ENCODE measurements at regions of chr6 and their contacts with region 1.

Region 1: DNA sequence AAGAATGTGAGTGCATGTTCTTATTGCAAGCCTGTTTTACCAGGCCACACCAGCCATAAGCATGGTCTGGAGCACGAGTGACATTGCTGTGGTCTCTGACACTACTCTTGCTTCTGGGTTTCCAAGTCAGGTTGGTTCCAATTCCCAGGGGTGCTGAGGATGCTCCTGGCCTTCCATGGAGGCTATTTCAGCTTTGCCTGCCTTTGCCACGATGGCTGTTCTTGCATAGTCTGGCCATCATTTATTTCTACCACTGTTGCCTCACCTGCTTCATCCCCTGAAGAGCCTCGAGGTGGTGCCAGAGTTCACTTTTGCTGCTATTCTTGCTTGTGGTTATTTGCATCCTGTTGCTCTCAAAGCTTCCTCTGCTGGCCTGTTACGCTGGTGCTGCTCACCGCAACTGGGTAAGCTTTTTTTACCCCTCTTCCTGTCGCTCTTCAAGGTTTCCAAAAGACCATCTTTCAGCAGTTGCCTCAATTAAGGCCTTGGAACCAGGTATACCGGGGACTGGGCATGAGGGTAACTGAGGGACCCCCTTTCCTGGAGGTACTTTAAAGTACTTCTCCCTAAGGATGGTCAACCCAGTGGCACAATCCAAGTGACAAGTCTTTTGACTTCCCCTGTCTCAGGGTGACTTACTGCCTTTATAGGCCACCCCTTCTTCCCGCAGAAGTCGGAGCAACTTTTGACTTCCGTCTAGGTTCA is 64.5 kb downstream of the AKAP7 start:
- DNase-seq: peak; percentile 83
- H3K4me3 Mint-ChIP-seq: peak overlapping the region; percentile 72
- H3K27ac Mint-ChIP-seq: peak overlapping the region; percentile 93
- H3K4me1 Mint-ChIP-seq: peaks cover 58% of the 10 kb centered on the region
- H3K27me3 Mint-ChIP-seq: no peaks in the 10 kb centered on the region

Region 2: DNA sequence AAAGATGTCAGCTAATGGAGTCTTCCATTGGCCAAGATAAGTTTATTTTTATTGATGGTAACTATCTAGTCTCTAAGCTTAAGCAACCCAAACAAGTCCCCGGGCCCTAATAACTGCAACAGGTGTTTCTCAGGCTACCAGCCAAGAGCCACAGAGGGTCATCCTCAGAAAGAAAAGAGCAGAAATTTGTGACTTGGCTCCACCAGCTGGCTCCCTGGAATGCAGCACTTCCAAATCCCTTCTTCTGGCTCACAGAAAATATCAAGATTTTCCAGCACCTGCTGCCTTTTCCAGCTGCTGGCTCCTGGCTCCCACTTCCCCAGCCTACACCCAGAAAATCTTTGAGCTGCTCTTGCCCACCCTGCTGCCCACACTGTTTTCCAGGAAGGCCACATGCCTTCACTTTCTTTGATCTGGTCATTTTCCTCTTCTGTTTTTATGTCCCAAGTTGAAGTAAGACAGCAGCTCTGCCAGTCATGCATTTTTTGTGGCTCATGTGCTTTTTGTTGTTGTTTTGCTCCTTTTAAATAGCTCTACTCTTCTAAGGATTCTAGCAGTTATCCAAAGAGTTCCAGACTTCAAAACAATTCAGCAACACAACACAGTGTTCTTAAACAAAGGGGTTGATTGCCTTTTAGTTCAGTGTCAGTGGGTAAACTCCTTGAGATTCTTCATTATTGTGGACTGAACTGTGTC is 523.5 kb before region 1 on chr6:
- CTCF ChIA-PET with region 1: no interaction called
- POLR2A ChIA-PET with region 1: no interaction called
- intact Hi-C with region 1: no loop called
- DNase-seq: no peak
- H3K4me3 Mint-ChIP-seq: no peak overlapping the region
- H3K27ac Mint-ChIP-seq: no peak overlapping the region
- H3K4me1 Mint-ChIP-seq: peaks cover 14% of the 10 kb centered on the region
- H3K27me3 Mint-ChIP-seq: no peaks in the 10 kb centered on the region

Region 3: DNA sequence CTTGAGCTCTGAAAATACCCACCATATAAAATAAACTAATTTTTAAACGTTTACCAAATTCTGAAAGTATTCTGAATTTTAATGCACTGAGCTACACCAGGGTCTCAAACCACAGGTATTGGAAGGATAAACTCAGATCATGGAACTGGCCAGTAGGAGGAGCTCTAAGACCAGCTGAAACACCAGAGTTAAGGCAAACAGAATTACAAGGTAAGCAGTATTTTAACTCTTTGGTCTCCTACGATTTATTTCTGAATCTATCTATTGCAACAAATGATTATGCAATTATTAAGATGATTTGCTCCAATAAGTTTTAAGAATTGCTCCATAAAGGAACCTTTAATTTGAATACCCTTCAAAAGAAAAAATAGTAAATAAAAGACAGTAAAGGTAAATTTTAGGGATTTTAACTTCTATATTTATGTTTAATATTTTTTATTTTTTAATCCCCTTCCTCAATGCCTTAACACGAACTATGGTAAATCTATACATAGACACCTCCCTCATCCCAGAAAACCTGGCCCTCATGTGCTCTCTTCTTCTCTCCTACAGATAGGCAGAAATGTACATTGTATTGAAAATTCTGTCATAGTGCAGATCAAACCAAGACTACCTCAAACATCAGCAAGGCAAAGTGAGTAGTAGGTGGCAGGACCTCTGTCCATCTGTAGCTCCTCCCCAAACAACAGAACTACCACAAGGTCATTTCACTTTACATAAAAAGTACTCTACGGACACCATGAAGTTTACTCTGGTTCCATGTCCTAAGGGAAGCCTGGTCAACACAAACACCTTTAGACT is 314.1 kb before region 1 on chr6:
- CTCF ChIA-PET with region 1: interaction called, 6 read pairs
- POLR2A ChIA-PET with region 1: interaction called, 3 read pairs
- intact Hi-C with region 1: loop called (anchors 1 kb)
- DNase-seq: peak; percentile 72
- H3K4me3 Mint-ChIP-seq: no peak overlapping the region
- H3K27ac Mint-ChIP-seq: no peak overlapping the region
- H3K4me1 Mint-ChIP-seq: no peaks in the 10 kb centered on the region
- H3K27me3 Mint-ChIP-seq: no peaks in the 10 kb centered on the region

Region 4: DNA sequence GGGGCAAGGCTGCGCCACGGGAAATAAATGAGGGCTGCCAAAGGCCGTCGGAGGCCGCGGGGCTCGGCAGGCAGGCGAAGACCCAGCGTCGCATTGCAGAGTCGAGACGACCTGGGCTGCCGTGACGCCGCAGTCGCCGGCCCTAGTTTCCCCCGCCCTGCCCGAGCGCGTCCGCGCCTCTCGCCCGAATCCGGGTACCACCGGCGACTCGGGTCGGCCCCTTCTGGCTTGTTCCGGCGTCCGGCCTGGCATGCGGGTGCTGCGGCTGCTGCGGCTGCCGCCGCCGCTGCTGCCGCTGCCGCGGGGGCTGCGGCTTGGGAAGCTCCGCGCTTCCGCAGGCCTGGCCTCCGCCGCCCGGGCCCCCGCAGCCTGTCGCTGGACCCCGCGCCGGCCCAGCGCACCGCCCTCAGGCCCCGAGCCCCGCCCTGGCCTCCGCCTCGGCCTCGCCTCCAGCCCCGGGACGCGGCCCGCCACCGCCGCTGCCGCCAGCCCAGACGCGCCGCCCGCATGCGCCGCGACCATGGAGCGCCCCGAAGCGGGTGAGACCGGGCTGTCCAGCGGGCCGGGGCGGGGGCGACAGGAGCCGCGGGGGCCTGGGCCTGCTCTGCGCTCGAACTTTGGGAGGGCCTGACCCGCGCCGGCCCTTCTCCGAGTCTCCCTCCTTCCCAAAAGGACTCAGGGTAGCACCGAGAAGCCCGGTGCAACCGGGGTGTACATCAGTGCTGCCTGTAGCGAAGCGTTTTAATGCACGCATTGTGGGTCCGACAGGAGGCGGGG is 64.3 kb before region 1 on chr6 and contains the start of gene AKAP7:
- CTCF ChIA-PET with region 1: interaction called, 3 read pairs
- POLR2A ChIA-PET with region 1: no interaction called
- intact Hi-C with region 1: loop called (anchors 5 kb)
- DNase-seq: peak; percentile 72
- H3K4me3 Mint-ChIP-seq: peak within 1 kb of the TSS; percentile 79
- H3K27ac Mint-ChIP-seq: peak within 1 kb of the TSS; percentile 83
- H3K4me1 Mint-ChIP-seq: peaks cover 14% of the 10 kb centered on the region
- H3K27me3 Mint-ChIP-seq: peaks cover 2% of the 10 kb centered on the region
- total RNA-seq, gene AKAP7: 4.0 to 4.3 TPM

Region 5: GRCh38 chr6:131281471-131282270 is 82.0 kb after region 1 on chr6:
- CTCF ChIA-PET with region 1: interaction called, 16 read pairs
- POLR2A ChIA-PET with region 1: no interaction called
- intact Hi-C with region 1: loop called (anchors 1 kb)
- DNase-seq: peak; percentile 77
- H3K4me3 Mint-ChIP-seq: peak overlapping the region; percentile 71
- H3K27ac Mint-ChIP-seq: peak overlapping the region; percentile 89
- H3K4me1 Mint-ChIP-seq: peaks cover 22% of the 10 kb centered on the region
- H3K27me3 Mint-ChIP-seq: no peaks in the 10 kb centered on the region

Region 6: DNA sequence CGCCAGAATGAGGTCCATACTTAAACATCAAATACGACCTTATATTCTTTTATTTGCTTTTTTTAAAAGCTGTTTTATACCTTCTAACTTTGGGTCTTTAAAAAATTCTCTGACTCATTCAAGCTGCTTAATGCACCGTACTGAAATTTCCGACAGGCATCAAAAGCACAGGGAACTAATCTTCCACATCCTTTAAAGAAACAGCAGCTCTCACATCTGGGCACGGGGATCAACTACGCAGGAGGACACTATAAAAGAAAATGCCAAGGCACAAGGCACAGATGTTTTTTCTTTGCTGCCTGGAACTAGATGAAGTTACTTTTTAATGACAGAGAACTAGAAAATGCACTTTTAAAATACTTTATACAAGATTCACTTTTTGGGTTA is 260.9 kb after region 1 on chr6:
- CTCF ChIA-PET with region 1: interaction called, 8 read pairs
- POLR2A ChIA-PET with region 1: no interaction called
- intact Hi-C with region 1: loop called (anchors 1 kb)
- DNase-seq: no peak
- H3K4me3 Mint-ChIP-seq: no peak overlapping the region
- H3K27ac Mint-ChIP-seq: no peak overlapping the region
- H3K4me1 Mint-ChIP-seq: peaks cover 4% of the 10 kb centered on the region
- H3K27me3 Mint-ChIP-seq: no peaks in the 10 kb centered on the region

Region 7: DNA sequence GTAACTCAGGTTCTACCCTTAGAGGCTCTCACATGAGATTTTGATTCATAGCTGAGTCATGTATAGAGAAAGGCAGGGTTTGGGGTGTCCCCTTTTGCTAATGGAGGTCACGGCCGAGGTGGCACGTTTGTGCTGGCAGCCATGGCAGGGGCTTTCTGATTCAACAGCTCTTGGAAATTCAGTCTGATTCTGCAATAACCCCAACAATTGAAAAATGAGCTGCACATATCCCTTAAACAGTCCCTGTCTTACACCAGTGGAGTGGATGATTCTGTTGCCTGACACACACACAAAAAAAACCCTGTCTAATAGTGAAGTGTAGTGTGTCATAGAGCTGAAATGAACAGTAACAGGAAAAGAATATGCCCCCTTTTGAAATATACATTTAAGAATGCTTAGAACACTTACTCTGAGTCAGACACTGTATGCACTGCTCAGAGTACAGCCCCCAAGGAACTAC is 332.9 kb after region 1 on chr6:
- CTCF ChIA-PET with region 1: interaction called, 77 read pairs
- POLR2A ChIA-PET with region 1: interaction called, 11 read pairs
- intact Hi-C with region 1: loop called (anchors 1 kb)
- DNase-seq: peak; percentile 82
- H3K4me3 Mint-ChIP-seq: no peak overlapping the region
- H3K27ac Mint-ChIP-seq: peak overlapping the region; percentile 76
- H3K4me1 Mint-ChIP-seq: peaks cover 42% of the 10 kb centered on the region
- H3K27me3 Mint-ChIP-seq: no peaks in the 10 kb centered on the region

Region 8: GRCh38 chr6:131909408-131910218 is 709.9 kb after region 1 on chr6:
- CTCF ChIA-PET with region 1: no interaction called
- POLR2A ChIA-PET with region 1: no interaction called
- intact Hi-C with region 1: loop called (anchors 5 kb)
- DNase-seq: peak; percentile 79
- H3K4me3 Mint-ChIP-seq: no peak overlapping the region
- H3K27ac Mint-ChIP-seq: no peak overlapping the region
- H3K4me1 Mint-ChIP-seq: peaks cover 6% of the 10 kb centered on the region
- H3K27me3 Mint-ChIP-seq: peaks cover 19% of the 10 kb centered on the region

Measured in activated CD4-positive, alpha-beta memory T cell treated with anti-CD3 and anti-CD28 coated beads for 36 hours (primary cell).